ENCODE measurements at regions of chr12 and their contacts with region 1.

Region 1: DNA sequence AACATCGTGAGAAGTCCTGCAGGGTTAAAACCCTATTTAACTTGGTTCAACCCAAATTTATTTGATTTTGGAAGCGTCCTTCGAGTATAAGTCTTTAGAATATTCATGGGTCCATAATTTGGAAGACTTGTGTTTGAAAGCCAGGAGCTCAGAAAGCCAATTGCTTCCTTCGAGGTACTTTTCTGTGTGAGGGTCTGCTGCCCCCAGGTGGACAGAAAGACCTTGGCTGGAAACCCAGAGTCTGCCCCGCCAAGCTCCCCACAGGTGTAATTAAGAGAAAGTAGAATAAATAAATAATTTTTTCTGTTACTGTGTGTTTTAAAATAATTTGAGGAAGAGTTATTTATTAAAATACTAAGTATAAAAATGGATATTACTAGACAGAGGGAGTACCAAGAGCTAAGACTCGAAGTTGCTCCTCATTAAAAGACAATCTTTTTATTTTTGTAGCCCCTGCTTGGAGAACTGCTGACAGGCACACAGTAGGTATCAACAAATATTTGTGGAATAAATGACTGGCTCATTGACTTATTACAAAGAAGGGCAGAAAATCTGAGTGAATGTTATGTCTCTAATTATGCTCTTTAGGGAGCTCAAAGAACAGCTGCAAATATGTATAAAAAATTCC is 105.8 kb downstream of the PAH start:
- DNase-seq: peak; percentile 73
- H3K4me3 Mint-ChIP-seq: no peak overlapping the region
- H3K27ac Mint-ChIP-seq: no peak overlapping the region
- H3K4me1 Mint-ChIP-seq: peaks cover 13% of the 10 kb centered on the region
- H3K27me3 Mint-ChIP-seq: no peaks in the 10 kb centered on the region
- CTCF ChIP-seq: peak; percentile 53

Region 2: DNA sequence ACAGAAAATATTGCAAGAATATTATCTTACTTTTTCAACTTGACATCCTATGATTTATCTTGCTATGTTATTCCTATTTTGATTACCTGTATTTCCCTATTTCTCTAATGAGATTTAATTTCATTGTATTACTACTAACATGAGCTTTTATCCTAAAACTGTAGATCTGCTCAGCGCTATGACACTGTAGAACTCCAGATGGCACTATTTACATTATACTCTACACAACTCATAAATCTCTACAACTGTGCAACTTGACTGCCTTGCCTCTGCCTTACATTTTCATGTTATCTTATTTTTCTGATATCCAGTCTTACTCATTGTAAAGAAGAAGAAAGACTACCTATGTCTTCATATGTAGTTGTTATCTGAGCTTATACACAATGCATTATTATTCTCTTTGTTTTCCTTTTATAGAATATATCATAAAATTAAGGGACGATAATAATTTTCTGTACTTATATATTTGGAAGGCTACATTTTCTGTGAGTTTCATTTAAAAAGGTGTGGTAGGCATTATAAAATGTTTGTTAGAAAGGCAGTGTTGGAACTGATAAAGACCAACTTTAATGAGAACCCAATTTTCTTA is 715.5 kb before region 1 on chr12:
- CTCF ChIA-PET with region 1: interaction called, 9 read pairs
- intact Hi-C with region 1: loop called (anchors 1 kb)
- DNase-seq: peak; percentile 12
- H3K4me3 Mint-ChIP-seq: no peak overlapping the region
- H3K27ac Mint-ChIP-seq: no peak overlapping the region
- H3K4me1 Mint-ChIP-seq: no peaks in the 10 kb centered on the region
- H3K27me3 Mint-ChIP-seq: no peaks in the 10 kb centered on the region
- CTCF ChIP-seq: peak; percentile 20

Region 3: GRCh38 chr12:102169922-102170621 is 641.2 kb before region 1 on chr12:
- CTCF ChIA-PET with region 1: interaction called, 7 read pairs
- intact Hi-C with region 1: loop called (anchors 5 kb)
- DNase-seq: peak; percentile 20
- H3K4me3 Mint-ChIP-seq: no peak overlapping the region
- H3K27ac Mint-ChIP-seq: no peak overlapping the region
- H3K4me1 Mint-ChIP-seq: peaks cover 7% of the 10 kb centered on the region
- H3K27me3 Mint-ChIP-seq: no peaks in the 10 kb centered on the region
- CTCF ChIP-seq: peak; percentile 46

Region 4: GRCh38 chr12:102300824-102301461 is 510.3 kb before region 1 on chr12:
- CTCF ChIA-PET with region 1: interaction called, 4 read pairs
- intact Hi-C with region 1: loop called (anchors 5 kb)
- DNase-seq: peak; percentile 38
- H3K4me3 Mint-ChIP-seq: no peak overlapping the region
- H3K27ac Mint-ChIP-seq: no peak overlapping the region
- H3K4me1 Mint-ChIP-seq: no peaks in the 10 kb centered on the region
- H3K27me3 Mint-ChIP-seq: no peaks in the 10 kb centered on the region
- CTCF ChIP-seq: no peak

Region 5: DNA sequence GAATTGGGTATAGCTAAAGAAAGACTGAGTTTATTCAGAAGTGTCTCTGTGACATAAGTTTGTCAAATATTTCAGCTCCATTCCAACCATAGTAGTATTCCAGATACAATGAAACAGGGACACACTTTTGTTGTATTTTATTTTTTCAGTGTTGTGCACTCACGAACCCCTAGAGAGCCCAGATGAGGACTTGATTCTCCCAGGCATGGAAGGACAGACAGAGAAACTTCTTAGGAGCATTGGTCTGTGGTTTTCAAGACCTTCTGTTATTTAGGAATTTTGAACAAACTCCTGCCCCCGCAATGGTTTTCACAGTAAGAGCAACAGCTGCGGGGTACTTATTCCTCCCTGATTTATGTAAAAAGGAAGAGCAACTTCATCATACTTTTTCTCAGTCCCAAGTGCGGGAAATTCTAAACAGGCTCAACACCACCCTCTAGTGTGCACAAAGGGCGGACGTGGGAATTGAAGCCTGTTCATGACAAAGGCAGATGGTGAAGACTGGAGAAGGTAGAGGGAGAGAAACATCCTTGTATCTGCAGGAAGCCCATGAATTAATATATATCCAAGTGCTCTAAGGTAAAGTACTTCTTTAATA is 41.8 kb before region 1 on chr12:
- CTCF ChIA-PET with region 1: interaction called, 7 read pairs
- intact Hi-C with region 1: loop called (anchors 1 kb)
- DNase-seq: peak; percentile 69
- H3K4me3 Mint-ChIP-seq: no peak overlapping the region
- H3K27ac Mint-ChIP-seq: no peak overlapping the region
- H3K4me1 Mint-ChIP-seq: no peaks in the 10 kb centered on the region
- H3K27me3 Mint-ChIP-seq: peaks cover 14% of the 10 kb centered on the region
- CTCF ChIP-seq: peak; percentile 63

Region 6: DNA sequence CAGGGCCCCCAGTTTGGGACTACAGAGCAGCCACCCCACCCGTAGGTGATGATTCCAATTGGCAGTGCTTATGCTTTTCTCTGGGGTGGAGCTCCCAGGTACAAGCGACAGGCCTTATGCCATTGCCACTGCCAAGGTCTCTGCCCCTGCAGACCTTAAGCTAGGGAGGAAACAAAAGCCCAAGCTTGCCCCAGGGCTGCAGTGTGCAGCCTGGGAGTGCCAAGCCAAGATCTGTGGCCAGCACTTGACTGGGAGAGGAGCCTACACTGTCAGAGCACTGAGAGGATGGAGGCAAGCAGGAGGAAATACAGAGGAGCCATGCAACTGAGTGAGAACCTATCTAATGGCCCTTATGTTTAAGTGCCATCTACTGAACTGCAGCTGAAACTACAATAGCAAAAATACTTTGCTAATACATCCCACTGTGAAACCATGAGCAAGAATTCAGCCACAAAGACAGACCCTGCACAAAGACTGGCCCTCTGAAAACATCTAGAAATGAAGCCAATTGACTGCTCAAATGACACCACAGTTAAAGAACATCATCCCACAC is 128.5 kb after region 1 on chr12:
- CTCF ChIA-PET with region 1: no interaction called
- intact Hi-C with region 1: no loop called
- DNase-seq: no peak
- H3K4me3 Mint-ChIP-seq: no peak overlapping the region
- H3K27ac Mint-ChIP-seq: no peak overlapping the region
- H3K4me1 Mint-ChIP-seq: no peaks in the 10 kb centered on the region
- H3K27me3 Mint-ChIP-seq: peaks cover 12% of the 10 kb centered on the region
- CTCF ChIP-seq: no peak

Measured in Calu3 (cell line).